Motor neuron (in vitro differentiated cells): ENCODE measurements at regions of chr1 and their contacts with region 1.

Region 1: DNA sequence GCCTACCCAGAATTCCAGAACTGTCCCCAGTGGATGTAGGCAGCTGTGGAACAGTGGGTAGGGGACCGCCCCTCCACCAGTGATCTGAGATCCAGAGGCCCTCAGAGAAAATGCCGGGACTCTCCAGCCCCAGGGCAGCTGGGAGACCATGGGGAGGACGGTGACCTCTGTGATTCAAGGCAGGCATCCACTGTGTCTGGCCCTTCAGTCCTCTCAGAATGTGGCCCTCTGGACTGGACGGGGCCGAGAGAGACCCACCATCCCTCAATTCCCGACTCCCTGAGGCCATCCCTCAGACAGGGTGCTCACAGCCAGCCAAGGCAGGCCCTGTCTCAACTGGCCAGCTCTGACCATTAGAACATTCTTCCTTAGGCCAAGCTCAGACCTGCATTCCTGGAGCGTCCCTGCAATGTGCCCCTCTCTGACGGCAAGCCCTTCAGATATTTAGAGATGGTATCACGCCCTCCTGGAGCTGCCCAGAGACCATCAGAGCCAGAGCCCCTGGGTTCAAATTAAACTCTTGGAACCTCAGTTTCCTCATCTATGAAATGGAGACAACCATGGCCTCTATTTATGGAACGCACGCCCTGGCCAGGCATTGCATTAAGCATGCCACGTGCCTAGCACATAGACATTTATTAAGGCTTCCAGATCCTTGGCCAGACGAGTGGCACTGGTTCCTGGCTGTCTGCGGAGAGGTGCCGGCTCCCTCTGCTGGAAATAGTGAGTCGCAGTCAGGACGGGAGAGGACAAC is 9.6 kb upstream of the EPS8L3 start:
- ATAC-seq: peak; percentile 79 to 94 (median 84)
- H3K4me3 ChIP-seq: no peak overlapping the region
- H3K27ac ChIP-seq: no peak overlapping the region
- H3K4me1 ChIP-seq: peaks cover 0 to 3% of the 10 kb centered on the region in 2 donors

Region 2: DNA sequence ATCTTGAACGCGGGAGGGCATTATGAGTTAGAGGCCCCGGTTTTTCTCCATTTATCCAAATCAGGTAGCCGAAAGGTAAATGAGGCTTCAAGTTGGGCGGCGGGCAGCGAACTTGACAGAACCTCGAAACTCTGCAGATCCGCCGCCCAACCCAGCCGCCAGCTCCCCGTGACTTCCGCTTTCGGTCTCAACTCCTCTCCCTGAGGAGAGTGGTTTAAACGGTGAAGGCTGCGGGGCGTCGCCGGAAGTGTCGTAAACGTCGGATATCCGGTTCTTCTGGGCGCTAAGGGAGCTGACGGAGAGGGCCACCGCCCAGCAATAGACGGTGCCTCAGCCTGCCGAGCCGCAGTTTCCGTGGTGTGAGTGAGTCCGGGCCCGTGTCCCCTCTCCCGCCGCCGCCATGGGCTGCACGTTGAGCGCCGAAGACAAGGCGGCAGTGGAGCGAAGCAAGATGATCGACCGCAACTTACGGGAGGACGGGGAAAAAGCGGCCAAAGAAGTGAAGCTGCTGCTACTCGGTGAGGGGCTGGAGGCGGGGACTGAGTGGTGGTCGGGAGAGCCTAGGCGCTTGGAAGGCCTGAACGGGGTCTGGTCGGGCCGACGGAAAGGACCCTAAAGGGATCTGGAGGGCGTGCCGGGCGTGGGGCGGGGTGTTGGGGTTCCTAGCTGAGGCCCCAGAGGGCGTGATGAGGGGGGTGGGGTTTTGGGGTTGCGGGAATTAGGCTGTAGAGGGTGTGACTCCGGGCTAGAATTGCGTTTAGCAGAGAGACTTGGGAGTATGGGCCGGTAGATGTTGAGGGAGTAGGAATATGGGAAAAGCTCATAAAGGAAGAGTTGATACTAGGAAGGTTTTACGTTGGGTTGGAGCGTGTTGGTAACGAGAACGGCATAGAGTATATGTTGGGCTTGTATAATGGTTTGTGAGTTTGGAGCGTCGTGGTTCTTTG is 224.7 kb before region 1 on chr1 and contains the start of gene GNAI3:
- in situ Hi-C with region 1: loop called (anchors 10 to 25 kb)
- ATAC-seq: peak; percentile 89 to 99 (median 98)
- H3K4me3 ChIP-seq: peak within 1 kb of the TSS; percentile 81 to 97 (median 90)
- H3K27ac ChIP-seq: peak within 1 kb of the TSS; percentile 90 to 93
- H3K4me1 ChIP-seq: peaks cover 15 to 35% of the 10 kb centered on the region in 2 donors
- total RNA-seq, gene GNAI3: 8.8 to 15.5 (median 13.9) TPM

Region 3: DNA sequence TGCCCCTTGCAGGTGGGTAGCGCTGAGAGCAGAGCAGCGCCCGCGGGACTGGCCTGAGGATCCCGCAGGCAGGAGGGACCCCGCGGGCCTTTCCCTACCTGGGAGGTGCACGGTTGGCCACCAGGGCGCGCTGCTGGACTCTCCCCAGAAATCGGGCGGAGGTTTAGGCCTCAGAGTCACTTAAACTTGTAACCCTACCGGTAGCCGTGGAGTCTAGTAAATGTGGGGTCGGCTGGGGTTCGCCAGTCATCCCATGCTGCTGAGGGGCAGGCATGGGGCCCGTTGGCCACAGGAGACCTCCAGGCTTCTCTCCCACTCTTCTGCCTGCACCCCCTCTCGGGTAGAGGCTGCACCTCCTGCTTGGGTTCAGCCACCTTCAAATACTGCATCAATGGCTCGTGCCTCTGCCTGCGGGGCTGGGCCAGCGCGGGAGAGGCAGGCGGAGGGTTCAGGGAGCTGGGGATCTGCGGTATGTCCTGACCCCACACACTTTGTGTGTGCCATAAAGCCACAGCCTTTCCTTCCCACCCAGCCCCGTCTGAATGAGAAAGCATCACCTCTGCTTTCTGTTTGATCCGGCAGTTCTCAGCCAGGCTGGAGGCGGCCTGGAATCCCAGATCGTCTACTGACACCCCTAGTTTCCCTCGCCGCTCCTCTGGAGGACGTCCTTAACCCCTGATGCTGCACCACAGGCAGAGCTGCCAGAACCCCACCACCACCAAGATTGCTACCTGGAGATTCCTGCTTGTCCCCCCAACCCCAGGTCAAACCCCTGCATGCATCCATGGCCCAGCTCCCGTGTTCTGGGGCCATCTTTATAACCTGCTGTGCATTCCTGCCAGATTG is 129.7 kb before region 1 on chr1:
- in situ Hi-C with region 1: loop called in 4 of 9 experiments (anchors 10 to 25 kb)
- ATAC-seq: peak; percentile 85 to 94 (median 90)
- H3K4me3 ChIP-seq: no peak overlapping the region
- H3K27ac ChIP-seq: no peak overlapping the region
- H3K4me1 ChIP-seq: peaks cover 0 to 3% of the 10 kb centered on the region in 2 donors

Region 4: DNA sequence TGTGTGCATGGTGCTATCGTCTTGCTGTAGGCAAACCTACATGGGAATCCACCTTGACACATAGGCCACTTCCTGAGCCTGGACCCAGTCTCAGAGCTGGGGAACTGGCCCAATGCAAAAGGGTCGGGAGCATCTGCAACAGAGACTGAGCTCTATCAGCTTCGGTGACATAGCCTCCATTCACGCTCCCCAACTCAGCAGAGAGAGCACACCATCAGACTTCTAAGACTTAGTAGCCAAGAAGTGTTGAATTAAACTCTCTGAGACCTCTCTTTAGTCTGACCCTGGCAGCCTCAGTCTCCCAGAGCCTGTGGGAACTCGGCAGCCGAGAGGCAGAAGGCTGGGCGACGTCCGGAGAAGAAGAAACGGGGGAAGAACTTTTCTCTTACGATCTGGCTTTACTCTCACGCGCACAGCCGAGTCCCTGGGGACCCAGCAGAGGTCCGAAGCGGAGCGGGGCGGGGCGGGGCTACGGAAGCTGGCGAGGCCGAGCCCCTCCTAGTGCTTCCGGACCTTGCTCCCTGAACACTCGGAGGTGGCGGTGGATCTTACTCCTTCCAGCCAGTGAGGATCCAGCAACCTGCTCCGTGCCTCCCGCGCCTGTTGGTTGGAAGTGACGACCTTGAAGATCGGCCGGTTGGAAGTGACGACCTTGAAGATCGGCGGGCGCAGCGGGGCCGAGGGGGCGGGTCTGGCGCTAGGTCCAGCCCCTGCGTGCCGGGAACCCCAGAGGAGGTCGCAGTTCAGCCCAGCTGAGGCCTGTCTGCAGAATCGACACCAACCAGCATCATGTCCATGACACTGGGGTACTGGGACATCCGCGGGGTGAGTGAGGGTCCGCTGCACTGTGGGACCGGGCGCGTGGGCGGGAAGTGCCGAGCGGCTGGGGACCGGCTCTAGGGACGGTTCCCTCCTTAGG is 117.5 kb before region 1 on chr1 and contains the start of gene GSTM4:
- in situ Hi-C with region 1: loop called in 1 of 9 experiments (anchors 25 kb)
- ATAC-seq: peak; percentile 87 to 97 (median 91)
- H3K4me3 ChIP-seq: peak within 1 kb of the TSS; percentile 33 to 52 (median 43)
- H3K27ac ChIP-seq: no peak within 1 kb of the TSS
- H3K4me1 ChIP-seq: peaks cover 19 to 37% of the 10 kb centered on the region in 2 donors
- total RNA-seq, gene GSTM4: 6.5 to 46.1 (median 9.1) TPM

Region 5: DNA sequence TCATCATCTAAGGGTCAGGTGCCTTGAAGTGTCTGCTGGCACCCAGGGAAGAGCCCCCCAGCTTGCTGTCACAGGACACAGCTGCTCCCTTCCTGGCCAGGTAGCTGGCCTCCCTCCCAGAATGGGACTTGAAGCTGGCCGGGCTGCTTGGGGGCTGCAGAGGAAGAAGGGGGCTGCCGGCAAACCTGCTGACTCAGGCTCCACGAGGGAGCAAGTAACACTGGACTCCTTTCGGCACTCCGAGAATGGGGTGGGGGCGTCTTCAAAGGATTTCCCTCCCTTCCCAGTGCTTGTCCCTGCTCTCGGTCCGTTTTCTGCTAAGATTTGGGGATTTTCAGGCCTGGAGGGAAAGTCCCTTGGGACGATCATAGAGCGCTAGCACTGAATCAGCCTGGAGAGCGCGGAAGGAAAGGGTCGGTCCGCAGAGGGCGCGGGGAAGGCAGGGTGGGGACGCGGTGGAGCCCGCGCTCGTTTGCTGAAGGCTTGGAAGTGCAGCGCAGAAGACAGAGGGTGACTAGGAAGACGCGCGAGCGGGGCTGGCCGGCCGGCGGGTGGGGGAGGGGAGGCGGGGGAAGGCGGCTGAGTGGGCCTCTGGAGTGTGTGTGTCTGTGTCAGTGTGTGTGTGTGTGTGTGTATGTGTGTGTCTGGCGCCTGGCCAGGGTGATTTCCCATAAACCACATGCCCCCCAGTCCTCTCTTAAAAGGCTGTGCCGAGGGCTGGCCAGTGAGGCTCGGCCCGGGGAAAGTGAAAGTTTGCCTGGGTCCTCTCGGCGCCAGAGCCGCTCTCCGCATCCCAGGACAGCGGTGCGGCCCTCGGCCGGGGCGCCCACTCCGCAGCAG is 137.0 kb after region 1 on chr1 and contains the start of gene CSF1:
- in situ Hi-C with region 1: loop called in 1 of 9 experiments (anchors 25 kb)
- ATAC-seq: peak; percentile 68 to 90 (median 87)
- H3K4me3 ChIP-seq: peak within 1 kb of the TSS; percentile 33 to 50 (median 46)
- H3K27ac ChIP-seq: peak within 1 kb of the TSS in 1 of 2 donors; percentile 28
- H3K4me1 ChIP-seq: peaks cover 18 to 22% of the 10 kb centered on the region in 2 donors
- total RNA-seq, gene CSF1: 1.2 to 27.1 (median 9.1) TPM

Region 6: DNA sequence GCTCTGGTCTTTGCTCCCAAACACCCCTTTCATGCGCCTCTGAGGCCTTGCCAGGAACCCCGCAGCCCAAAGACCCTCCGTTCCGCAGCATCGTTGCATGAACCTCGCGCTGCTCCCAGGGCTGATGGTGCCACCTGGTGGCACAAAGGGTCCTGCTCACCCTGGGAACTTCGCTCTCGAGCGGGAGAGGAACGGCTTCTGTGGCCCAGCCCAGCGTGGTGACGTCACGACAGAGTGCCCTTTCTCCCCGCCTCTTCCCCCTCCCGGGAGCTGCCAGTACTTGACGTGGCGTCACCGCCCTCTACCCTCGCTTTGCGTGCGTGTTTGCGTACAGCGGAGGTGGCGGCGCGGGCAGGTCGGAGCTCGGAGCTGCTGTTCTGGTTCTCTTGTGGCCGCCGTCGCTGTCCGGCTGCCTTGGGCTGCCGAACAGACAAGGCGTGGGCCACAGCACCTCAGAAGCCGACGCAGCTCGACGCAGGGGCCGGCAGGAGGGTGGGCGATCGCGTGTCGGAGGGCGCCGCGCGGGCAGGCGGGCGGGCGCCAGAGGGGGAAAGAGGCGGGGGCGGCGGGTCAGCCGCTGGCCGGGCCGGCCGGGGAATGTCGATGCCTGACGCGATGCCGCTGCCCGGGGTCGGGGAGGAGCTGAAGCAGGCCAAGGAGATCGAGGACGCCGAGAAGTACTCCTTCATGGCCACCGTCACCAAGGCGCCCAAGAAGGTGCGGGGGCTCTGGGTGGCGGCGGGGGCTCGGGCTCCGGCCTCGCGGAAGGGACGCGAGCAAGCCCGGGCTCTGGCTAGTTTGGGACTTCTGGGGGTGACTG is 211.3 kb after region 1 on chr1 and contains the start of gene AHCYL1:
- in situ Hi-C with region 1: loop called (anchors 5 to 25 kb)
- ATAC-seq: peak; percentile 92 to 96 (median 95)
- H3K4me3 ChIP-seq: peak within 1 kb of the TSS; percentile 63 to 91 (median 75)
- H3K27ac ChIP-seq: peak within 1 kb of the TSS; percentile 91 to 93
- H3K4me1 ChIP-seq: peaks cover 24 to 26% of the 10 kb centered on the region in 2 donors
- total RNA-seq, gene AHCYL1: 33.7 to 96.8 (median 56.7) TPM